Activated CD4-positive, alpha-beta memory T cell treated with anti-CD3 and anti-CD28 coated beads, Interleukin-2, amount 10 ng/mL, durations not matched to agents 7 days and 5 days (primary cell): ENCODE measurements at regions of chr14 and their contacts with region 1.

Region 1: DNA sequence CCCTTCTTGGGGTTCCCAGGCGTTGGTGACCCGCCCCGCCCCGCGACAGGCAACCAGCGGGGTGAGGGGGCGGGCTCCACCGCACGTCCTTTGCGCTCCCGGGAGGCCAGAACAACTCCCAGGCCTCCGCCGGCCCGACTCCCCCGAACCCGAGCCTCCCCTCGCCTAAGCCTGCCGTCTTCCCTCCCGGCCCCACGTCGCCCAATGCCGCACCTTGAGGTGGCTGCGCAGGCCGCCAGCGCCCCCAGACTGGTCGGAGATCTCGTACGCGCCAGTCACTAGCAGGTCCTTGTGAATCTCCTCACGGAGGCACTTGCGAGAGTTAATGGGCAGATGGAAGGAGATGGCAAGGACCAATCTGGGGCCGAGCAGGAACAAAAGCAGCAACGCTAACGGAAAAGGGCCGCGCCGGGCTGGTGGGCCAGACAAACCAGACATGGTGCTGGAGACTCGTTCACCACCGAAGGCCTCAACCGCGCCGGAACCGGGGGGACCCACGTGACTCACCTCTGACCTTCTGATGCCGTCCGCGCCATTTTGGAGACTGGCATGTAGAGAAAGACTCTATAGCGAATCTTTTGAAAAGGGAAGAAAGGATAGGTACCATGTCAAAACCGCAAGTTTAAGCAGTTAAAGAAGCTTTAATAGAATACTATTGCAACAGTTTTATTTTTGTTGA is at the start of gene TMED10:
- DNase-seq: peak; percentile 93
- H3K4me3 Mint-ChIP-seq: peak within 1 kb of the TSS; percentile 81
- H3K27ac Mint-ChIP-seq: peak within 1 kb of the TSS; percentile 85
- H3K4me1 Mint-ChIP-seq: peaks cover 36% of the 10 kb centered on the region
- H3K27me3 Mint-ChIP-seq: peaks cover 5% of the 10 kb centered on the region
- total RNA-seq, gene TMED10: 207 to 224 TPM

Region 2: GRCh38 chr14:75113932-75114539 is 62.2 kb before region 1 on chr14:
- CTCF ChIA-PET with region 1: no interaction called
- POLR2A ChIA-PET with region 1: no interaction called
- DNase-seq: peak; percentile 26
- H3K4me3 Mint-ChIP-seq: no peak overlapping the region
- H3K27ac Mint-ChIP-seq: peak overlapping the region; percentile 69
- H3K4me1 Mint-ChIP-seq: peaks cover 24% of the 10 kb centered on the region
- H3K27me3 Mint-ChIP-seq: no peaks in the 10 kb centered on the region

Region 3: GRCh38 chr14:75158843-75159614 is 17.3 kb before region 1 on chr14:
- CTCF ChIA-PET with region 1: interaction called, 4 read pairs
- POLR2A ChIA-PET with region 1: interaction called, 17 read pairs
- DNase-seq: no peak
- H3K4me3 Mint-ChIP-seq: no peak overlapping the region
- H3K27ac Mint-ChIP-seq: peak overlapping the region; percentile 62
- H3K4me1 Mint-ChIP-seq: peaks cover 69% of the 10 kb centered on the region
- H3K27me3 Mint-ChIP-seq: no peaks in the 10 kb centered on the region

Region 4: GRCh38 chr14:75223664-75224154 is 47.4 kb after region 1 on chr14:
- CTCF ChIA-PET with region 1: no interaction called
- POLR2A ChIA-PET with region 1: no interaction called
- DNase-seq: peak; percentile 21
- H3K4me3 Mint-ChIP-seq: no peak overlapping the region
- H3K27ac Mint-ChIP-seq: no peak overlapping the region
- H3K4me1 Mint-ChIP-seq: peaks cover 15% of the 10 kb centered on the region
- H3K27me3 Mint-ChIP-seq: peaks cover 13% of the 10 kb centered on the region

Region 5: DNA sequence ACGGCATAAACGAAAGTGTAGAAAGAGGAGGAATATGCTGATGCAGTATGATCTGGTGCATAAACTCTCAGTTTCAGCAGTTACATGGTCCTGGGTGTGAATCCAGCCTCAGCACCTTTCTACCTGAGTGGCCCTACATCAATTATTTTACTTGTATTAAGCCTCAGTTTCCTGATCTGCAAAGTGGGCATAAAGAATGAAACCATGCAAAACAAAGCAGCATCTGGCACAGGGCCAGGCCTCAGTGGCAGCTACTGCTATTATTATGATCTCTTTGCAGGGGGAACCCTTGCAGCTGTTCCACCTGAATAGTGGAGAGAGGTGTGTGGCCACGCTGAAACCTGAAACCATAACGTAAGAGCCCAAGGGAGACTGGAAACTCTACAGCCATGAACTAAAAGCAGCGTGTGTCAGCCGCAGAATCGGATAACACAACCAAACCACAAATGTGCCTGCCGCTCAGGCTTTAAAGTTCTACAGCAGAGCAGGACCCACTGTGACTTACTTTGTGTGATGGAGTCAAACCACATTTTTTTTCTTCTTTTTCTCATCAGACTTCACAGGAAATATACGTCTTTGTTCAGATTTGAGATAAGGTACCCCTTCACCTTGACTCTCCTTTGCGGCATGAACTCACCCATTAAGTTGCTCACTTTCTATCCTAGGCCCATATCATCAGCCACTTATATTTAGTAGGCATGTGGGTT is 73.1 kb after region 1 on chr14:
- CTCF ChIA-PET with region 1: no interaction called
- POLR2A ChIA-PET with region 1: interaction called, 16 read pairs
- DNase-seq: peak; percentile 92
- H3K4me3 Mint-ChIP-seq: peak overlapping the region; percentile 46
- H3K27ac Mint-ChIP-seq: peak overlapping the region; percentile 45
- H3K4me1 Mint-ChIP-seq: peaks cover 50% of the 10 kb centered on the region
- H3K27me3 Mint-ChIP-seq: peaks cover 56% of the 10 kb centered on the region

Region 6: DNA sequence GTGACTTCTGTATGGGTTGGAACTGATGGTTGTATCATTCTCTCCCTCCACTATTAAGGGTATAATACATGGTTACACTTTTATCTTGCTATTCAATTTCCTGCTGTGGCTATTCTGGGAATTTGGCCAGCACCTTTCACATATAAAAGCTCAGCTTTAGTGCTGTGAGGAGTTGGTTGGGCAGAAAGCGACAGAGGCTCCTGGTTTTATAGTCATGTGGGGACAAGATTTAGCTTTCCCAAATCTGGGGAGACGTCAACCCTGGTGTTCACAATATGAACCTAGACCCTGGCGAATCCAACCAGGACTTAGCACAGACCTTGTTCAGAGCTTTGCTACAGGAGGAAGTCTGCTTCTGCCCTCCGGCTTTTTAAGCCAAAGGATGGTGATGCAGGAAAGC is 138.9 kb after region 1 on chr14:
- CTCF ChIA-PET with region 1: no interaction called
- POLR2A ChIA-PET with region 1: no interaction called
- DNase-seq: no peak
- H3K4me3 Mint-ChIP-seq: no peak overlapping the region
- H3K27ac Mint-ChIP-seq: no peak overlapping the region
- H3K4me1 Mint-ChIP-seq: peaks cover 14% of the 10 kb centered on the region
- H3K27me3 Mint-ChIP-seq: peaks cover 19% of the 10 kb centered on the region